Right ventricle myocardium inferior (tissue), 1 donor: ENCODE measurements at regions of chr13 and their contacts with region 1.

Region 1: GRCh38 chr13:58119804-58120203 is 488.3 kb downstream of the PCDH17 start:
- DNase-seq: no peak
- ATAC-seq: no peak

Region 2: GRCh38 chr13:57946361-57946760 is 173.4 kb before region 1 on chr13:
- intact Hi-C with region 1: no loop called
- DNase-seq: no peak
- ATAC-seq: no peak

Region 3: DNA sequence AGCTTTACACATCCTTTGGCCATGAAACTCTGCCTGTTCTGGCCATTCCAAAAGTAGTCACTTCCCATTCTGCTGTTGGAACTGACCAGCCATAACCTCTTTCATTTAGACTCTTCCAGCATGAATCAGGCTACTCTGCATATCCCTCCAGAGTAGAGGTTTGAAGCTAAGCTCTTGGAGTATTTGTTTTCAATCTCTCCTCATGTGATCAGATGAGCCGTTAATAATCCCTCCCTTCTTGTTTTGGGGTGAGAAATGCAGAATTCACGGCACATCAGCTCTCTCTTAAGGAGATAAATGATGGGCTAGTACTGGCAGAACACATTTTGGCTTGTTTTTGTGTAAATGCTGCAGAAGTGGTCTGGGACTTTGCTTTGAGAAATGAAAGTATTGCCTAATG is 31.6 kb after region 1 on chr13:
- intact Hi-C with region 1: loop called (anchors 2 kb)
- DNase-seq: no peak
- ATAC-seq: peak; percentile 52